GM12878 (cell line): ENCODE measurements at regions of chr7 and their contacts with region 1.

Region 1: GRCh38 chr7:77812290-77812685 is 13.7 kb downstream of the PHTF2 start:
- DNase-seq: no peak
- ATAC-seq: no peak
- H3K4me3 ChIP-seq: no peak overlapping the region
- H3K27ac ChIP-seq: no peak overlapping the region
- H3K4me1 ChIP-seq: no peaks in the 10 kb centered on the region
- H3K27me3 ChIP-seq: no peaks in the 10 kb centered on the region
- CTCF ChIP-seq: no peak
- EP300 ChIP-seq: no peak
- POLR2A ChIP-seq: no peak
- RAD21 ChIP-seq: no peak

Region 2: GRCh38 chr7:77771901-77772300 is 40.4 kb before region 1 on chr7:
- CTCF ChIA-PET with region 1: no interaction called
- POLR2A ChIA-PET with region 1: no interaction called
- RAD21 ChIA-PET with region 1: no interaction called
- SMC1A ChIA-PET with region 1: no interaction called
- in situ Hi-C with region 1: no loop called
- intact Hi-C with region 1: no loop called
- DNase-seq: no peak
- ATAC-seq: no peak
- H3K4me3 ChIP-seq: no peak overlapping the region
- H3K27ac ChIP-seq: no peak overlapping the region
- H3K4me1 ChIP-seq: no peaks in the 10 kb centered on the region
- H3K27me3 ChIP-seq: no peaks in the 10 kb centered on the region
- CTCF ChIP-seq: no peak
- EP300 ChIP-seq: no peak
- POLR2A ChIP-seq: no peak
- RAD21 ChIP-seq: no peak

Region 3: GRCh38 chr7:77798394-77799077 is 13.8 kb before region 1 on chr7 and contains the starts of genes PHTF2 and TMEM60:
- CTCF ChIA-PET with region 1: interaction called, 6 read pairs
- POLR2A ChIA-PET with region 1: no interaction called
- RAD21 ChIA-PET with region 1: no interaction called
- SMC1A ChIA-PET with region 1: interaction called, 16 read pairs
- in situ Hi-C with region 1: no loop called
- intact Hi-C with region 1: no loop called
- DNase-seq: peak; percentile 99
- ATAC-seq: peak; percentile 92
- H3K4me3 ChIP-seq: peak within 1 kb of the TSS; percentile 94
- H3K27ac ChIP-seq: peak within 1 kb of the TSS; percentile 86
- H3K4me1 ChIP-seq: peaks cover 16% of the 10 kb centered on the region
- H3K27me3 ChIP-seq: no peaks in the 10 kb centered on the region
- CTCF ChIP-seq: peak; percentile 37 to 66 (median 50)
- EP300 ChIP-seq: 0 out of 4 replicates have a peak, but pooled peaks of 1 of the 2 experiments have one; percentile 0
- POLR2A ChIP-seq: peak; percentile 76
- RAD21 ChIP-seq: no peak
- polyA plus RNA-seq, gene PHTF2: 12.9 to 14.1 TPM
- polyA plus RNA-seq, gene TMEM60: 75.6 to 94.2 TPM